ENCODE measurements at regions of chr19 and their contacts with region 1.

Region 1: GRCh38 chr19:9818734-9819589 is at the start of gene FBXL12:
- DNase-seq: peak; percentile 100
- ATAC-seq: peak; percentile 84
- H3K4me3 ChIP-seq: peak within 1 kb of the TSS; percentile 47 to 98 (median 96)
- H3K4me3 Mint-ChIP-seq: peak within 1 kb of the TSS; percentile 95
- H3K27ac ChIP-seq: peak within 1 kb of the TSS; percentile 92 to 98
- H3K27ac Mint-ChIP-seq: peak within 1 kb of the TSS; percentile 92
- H3K4me1 ChIP-seq: peaks cover 10 to 15% of the 10 kb centered on the region in 2 donors
- H3K4me1 Mint-ChIP-seq: peaks cover 29% of the 10 kb centered on the region
- H3K27me3 ChIP-seq: no peaks in the 10 kb centered on the region
- H3K27me3 Mint-ChIP-seq: no peaks in the 10 kb centered on the region
- CTCF ChIP-seq: no peak
- total RNA-seq, gene FBXL12: 41.5 and 41.6 TPM in 2 replicates

Region 2: DNA sequence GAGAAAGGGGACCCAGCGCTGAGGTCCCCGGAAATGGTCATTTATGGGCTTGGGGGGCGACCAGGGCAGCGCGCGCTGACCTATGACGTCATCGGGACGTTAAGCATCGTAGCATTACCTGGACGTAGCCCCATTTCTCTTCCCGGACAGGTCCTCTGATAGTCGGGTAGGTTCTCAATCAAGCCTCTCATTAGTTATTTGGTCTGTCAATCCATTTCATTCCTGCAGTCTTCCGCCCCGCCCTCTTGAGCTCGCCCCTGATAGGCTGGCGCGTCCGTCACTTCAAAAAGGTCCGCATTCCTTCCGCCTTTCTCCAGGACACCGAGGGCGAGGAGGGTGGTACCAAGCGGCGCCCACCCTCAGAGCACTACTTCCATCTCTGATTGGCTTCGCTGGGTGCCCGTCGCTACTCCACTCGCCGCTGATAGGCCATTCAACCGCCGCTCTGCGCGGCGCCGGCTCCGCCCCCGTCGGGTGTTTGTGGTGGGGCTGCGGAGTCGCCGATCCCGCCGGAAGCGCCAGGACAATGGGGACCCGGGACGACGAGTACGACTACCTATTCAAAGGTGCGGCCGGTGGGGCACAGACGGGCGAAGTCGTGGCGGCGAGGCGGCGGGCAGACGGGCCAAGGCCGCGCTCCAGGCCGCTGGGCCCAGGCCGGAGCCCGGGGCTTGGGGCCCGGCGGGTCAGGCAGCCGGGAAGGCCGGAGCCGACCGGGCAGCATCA is 1428.9 kb before region 1 on chr19 and contains the start of gene RAB11B:
- CTCF ChIA-PET with region 1: no interaction called
- POLR2A ChIA-PET with region 1: no interaction called
- intact Hi-C with region 1: loop called (anchors 5 kb)
- DNase-seq: peak; percentile 100
- ATAC-seq: peak; percentile 86
- H3K4me3 ChIP-seq: peak within 1 kb of the TSS; percentile 54 to 89 (median 82)
- H3K4me3 Mint-ChIP-seq: peak within 1 kb of the TSS; percentile 95
- H3K27ac ChIP-seq: peak within 1 kb of the TSS; percentile 70 to 96
- H3K27ac Mint-ChIP-seq: peak within 1 kb of the TSS; percentile 98
- H3K4me1 ChIP-seq: peaks cover 10 to 20% of the 10 kb centered on the region in 2 donors
- H3K4me1 Mint-ChIP-seq: peaks cover 29% of the 10 kb centered on the region
- H3K27me3 ChIP-seq: no peaks in the 10 kb centered on the region
- H3K27me3 Mint-ChIP-seq: no peaks in the 10 kb centered on the region
- CTCF ChIP-seq: no peak
- total RNA-seq, gene RAB11B: 126 and 130 TPM in 2 replicates

Region 3: DNA sequence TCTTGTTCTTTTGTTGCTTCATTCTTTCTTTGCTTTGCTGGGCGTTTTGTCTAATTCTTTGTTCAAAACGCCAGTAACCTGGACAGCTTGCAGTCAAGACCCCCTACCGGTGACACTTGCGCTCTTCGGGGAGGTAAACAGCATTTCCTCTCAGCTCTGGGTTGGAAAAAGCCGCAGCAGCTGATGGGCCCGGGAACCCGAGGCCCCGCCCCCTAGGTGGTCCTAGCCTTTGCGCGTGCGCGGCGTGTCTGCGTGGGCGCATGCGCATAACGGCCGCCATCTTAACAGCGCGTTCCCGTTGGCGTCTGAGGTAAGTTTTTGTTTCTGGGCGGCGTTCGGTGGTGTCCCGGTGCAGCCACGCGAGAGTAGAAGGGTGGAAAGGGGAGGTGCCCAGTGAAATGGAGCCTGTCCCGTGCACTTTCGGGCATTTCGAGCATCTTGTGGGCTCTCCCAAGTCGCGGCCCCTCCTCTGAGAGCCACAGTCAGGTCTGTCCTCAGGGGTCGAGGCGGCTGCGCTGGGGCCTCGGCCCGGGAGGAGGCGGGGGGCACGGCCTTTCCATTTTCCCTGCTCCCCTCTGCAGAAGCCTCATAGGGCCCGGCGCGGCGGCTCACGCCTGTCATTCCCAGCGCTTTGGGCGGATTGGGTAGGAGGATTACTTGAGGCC is 494.9 kb before region 1 on chr19 and contains the start of gene ZNF559:
- CTCF ChIA-PET with region 1: no interaction called
- POLR2A ChIA-PET with region 1: no interaction called
- intact Hi-C with region 1: loop called (anchors 1 kb)
- DNase-seq: peak; percentile 98
- ATAC-seq: peak; percentile 89
- H3K4me3 ChIP-seq: peak within 1 kb of the TSS; percentile 72 to 88 (median 79)
- H3K4me3 Mint-ChIP-seq: peak within 1 kb of the TSS; percentile 96
- H3K27ac ChIP-seq: peak within 1 kb of the TSS; percentile 78 to 81
- H3K27ac Mint-ChIP-seq: peak within 1 kb of the TSS; percentile 96
- H3K4me1 ChIP-seq: peaks cover 11 to 17% of the 10 kb centered on the region in 2 donors
- H3K4me1 Mint-ChIP-seq: peaks cover 24% of the 10 kb centered on the region
- H3K27me3 ChIP-seq: no peaks in the 10 kb centered on the region
- H3K27me3 Mint-ChIP-seq: no peaks in the 10 kb centered on the region
- CTCF ChIP-seq: peak; percentile 59
- total RNA-seq, gene ZNF559: 49.3 and 60.9 TPM in 2 replicates

Region 4: DNA sequence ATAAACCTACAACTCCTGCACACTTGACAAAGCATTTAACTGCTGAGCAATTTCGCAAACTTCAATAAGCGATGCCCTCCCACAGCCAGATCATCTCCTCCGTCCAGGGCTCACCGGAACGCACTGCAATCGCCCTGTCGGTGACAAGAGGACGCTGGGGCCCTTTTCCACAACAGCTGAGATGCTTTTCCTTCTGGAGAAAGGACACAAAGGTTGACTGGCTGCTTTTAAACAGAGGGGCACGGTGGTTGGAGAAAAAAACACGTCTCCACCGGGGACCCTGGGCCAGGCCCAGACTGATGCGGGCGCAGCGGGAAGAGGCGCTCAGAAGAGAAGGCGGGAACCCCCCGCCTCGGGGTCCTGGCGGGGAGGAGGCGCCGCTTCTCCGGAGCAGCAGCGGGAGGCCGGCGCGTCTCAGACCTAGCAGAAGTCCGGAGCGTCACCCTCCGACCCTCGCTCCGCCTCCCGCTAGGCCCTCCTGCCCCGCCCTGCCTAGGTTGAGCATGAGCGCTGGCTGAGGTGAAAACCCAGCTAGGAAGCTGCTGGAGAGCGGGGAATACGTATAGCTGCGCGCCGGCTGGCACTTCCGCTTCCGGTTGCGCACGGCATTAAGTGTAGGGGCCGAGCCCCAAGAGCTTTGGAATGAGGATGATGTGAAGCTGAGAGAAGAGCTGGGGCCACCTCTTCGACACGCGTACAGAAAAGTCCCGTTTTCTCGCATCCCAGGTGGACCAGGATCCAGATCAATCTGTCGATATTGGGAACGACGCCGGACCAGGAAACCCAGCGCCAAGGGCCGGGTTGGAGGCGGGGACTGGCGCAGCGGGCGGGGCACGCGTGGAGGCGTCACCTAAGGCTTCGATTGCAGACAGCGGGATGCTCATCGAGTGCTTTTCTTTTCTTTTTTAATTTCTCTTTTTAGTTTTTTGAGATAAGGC is 50.5 kb before region 1 on chr19 and contains the start of gene ZNF846:
- CTCF ChIA-PET with region 1: no interaction called
- POLR2A ChIA-PET with region 1: interaction called, 8 read pairs
- intact Hi-C with region 1: loop called (anchors 1 kb)
- DNase-seq: peak; percentile 96
- ATAC-seq: peak; percentile 98
- H3K4me3 ChIP-seq: peak within 1 kb of the TSS; percentile 52 to 96 (median 88)
- H3K4me3 Mint-ChIP-seq: peak within 1 kb of the TSS; percentile 96
- H3K27ac ChIP-seq: peak within 1 kb of the TSS; percentile 69 to 94
- H3K27ac Mint-ChIP-seq: peak within 1 kb of the TSS; percentile 98
- H3K4me1 ChIP-seq: peaks cover 0 to 13% of the 10 kb centered on the region in 2 donors
- H3K4me1 Mint-ChIP-seq: peaks cover 15% of the 10 kb centered on the region
- H3K27me3 ChIP-seq: no peaks in the 10 kb centered on the region
- H3K27me3 Mint-ChIP-seq: no peaks in the 10 kb centered on the region
- CTCF ChIP-seq: no peak
- total RNA-seq, gene ZNF846: 18.2 and 24.5 TPM in 2 replicates

Region 5: DNA sequence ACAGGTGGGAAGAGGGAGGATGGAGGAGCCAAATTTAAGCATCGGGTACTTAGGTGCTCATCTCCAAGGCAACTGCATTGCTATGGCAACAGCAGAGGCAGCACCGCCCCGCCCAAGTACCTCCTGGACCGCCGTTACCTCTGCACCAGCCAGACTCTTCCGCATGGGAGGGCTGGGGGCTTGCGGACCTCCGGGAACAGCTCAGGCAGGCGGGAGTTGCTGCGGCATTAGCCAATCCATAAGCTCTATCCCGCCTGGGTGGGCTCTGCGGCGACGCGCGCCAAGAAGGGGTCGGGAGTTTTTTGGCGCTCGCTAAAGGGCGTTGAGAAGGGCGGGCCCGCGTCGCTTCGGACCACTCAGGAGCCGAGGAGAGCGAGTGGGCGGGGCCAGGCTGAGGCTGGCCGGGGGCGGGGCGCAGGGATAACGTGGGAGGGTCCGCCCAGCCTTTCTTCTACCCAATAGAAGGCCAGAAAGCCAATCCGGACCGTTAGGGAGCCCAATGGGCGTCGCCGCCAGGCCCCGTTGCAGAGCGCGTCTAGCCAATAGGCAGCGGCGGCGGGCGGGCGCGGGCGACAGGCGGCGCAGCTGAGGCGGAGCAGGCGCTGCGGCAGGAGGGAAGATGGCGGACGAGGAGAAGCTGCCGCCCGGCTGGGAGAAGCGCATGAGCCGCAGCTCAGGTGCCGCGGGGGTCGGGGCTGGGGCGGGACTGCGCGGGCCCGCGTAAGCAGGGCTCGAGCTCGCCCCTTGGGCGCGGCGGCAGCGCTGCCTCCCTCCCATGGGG is 16.0 kb after region 1 on chr19 and contains the start of gene PIN1:
- CTCF ChIA-PET with region 1: no interaction called
- POLR2A ChIA-PET with region 1: interaction called, 4 read pairs
- intact Hi-C with region 1: loop called (anchors 1 kb)
- DNase-seq: peak; percentile 100
- ATAC-seq: peak; percentile 95
- H3K4me3 ChIP-seq: peak within 1 kb of the TSS; percentile 44 to 83 (median 71)
- H3K4me3 Mint-ChIP-seq: peak within 1 kb of the TSS; percentile 97
- H3K27ac ChIP-seq: peak within 1 kb of the TSS; percentile 56 to 69
- H3K27ac Mint-ChIP-seq: peak within 1 kb of the TSS; percentile 96
- H3K4me1 ChIP-seq: peaks cover 7 to 15% of the 10 kb centered on the region in 2 donors
- H3K4me1 Mint-ChIP-seq: peaks cover 16% of the 10 kb centered on the region
- H3K27me3 ChIP-seq: no peaks in the 10 kb centered on the region
- H3K27me3 Mint-ChIP-seq: no peaks in the 10 kb centered on the region
- CTCF ChIP-seq: peak; percentile 57
- total RNA-seq, gene PIN1: 58.5 and 58.9 TPM in 2 replicates

Region 6: DNA sequence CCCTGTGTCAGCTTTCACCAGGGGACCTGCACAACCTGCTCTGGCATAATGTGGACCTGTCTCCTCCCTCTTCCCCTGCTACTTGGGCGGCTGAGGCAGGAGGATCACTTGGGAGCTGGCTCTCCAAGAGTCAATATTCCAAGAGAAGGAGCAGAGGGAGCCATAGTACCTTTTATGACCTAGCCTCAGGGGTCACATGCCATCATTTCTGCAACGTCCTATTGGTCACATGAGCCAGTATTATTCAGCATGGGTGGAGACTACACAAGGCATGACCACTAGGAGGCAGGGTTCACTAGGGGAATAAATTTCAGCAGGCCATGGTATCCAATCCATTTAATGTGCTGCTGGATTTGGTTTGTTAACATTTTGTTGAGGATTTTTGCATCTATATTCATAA is 255.2 kb after region 1 on chr19:
- CTCF ChIA-PET with region 1: no interaction called
- POLR2A ChIA-PET with region 1: no interaction called
- intact Hi-C with region 1: no loop called
- DNase-seq: peak; percentile 63
- ATAC-seq: peak; percentile 17
- H3K4me3 ChIP-seq: no peak overlapping the region
- H3K4me3 Mint-ChIP-seq: no peak overlapping the region
- H3K27ac ChIP-seq: no peak overlapping the region
- H3K27ac Mint-ChIP-seq: no peak overlapping the region
- H3K4me1 ChIP-seq: no peaks in the 10 kb centered on the region
- H3K4me1 Mint-ChIP-seq: no peaks in the 10 kb centered on the region
- H3K27me3 ChIP-seq: no peaks in the 10 kb centered on the region
- H3K27me3 Mint-ChIP-seq: peaks cover 10% of the 10 kb centered on the region
- CTCF ChIP-seq: peak; percentile 23

Region 7: GRCh38 chr19:11374433-11375142 is 1555.6 kb after region 1 on chr19 and contains the start of gene SWSAP1:
- CTCF ChIA-PET with region 1: no interaction called
- POLR2A ChIA-PET with region 1: no interaction called
- intact Hi-C with region 1: loop called (anchors 10 kb)
- DNase-seq: peak; percentile 99
- ATAC-seq: peak; percentile 89
- H3K4me3 ChIP-seq: peak within 1 kb of the TSS; percentile 64 to 83 (median 75)
- H3K4me3 Mint-ChIP-seq: no peak within 1 kb of the TSS
- H3K27ac ChIP-seq: peak within 1 kb of the TSS; percentile 88 to 93
- H3K27ac Mint-ChIP-seq: peak within 1 kb of the TSS; percentile 69
- H3K4me1 ChIP-seq: peaks cover 27 to 32% of the 10 kb centered on the region in 2 donors
- H3K4me1 Mint-ChIP-seq: peaks cover 14% of the 10 kb centered on the region
- H3K27me3 ChIP-seq: no peaks in the 10 kb centered on the region
- H3K27me3 Mint-ChIP-seq: no peaks in the 10 kb centered on the region
- CTCF ChIP-seq: no peak
- total RNA-seq, gene SWSAP1: 5.0 TPM in 2 replicates